ENCODE measurements at regions of chr10 and their contacts with region 1.

Region 1: DNA sequence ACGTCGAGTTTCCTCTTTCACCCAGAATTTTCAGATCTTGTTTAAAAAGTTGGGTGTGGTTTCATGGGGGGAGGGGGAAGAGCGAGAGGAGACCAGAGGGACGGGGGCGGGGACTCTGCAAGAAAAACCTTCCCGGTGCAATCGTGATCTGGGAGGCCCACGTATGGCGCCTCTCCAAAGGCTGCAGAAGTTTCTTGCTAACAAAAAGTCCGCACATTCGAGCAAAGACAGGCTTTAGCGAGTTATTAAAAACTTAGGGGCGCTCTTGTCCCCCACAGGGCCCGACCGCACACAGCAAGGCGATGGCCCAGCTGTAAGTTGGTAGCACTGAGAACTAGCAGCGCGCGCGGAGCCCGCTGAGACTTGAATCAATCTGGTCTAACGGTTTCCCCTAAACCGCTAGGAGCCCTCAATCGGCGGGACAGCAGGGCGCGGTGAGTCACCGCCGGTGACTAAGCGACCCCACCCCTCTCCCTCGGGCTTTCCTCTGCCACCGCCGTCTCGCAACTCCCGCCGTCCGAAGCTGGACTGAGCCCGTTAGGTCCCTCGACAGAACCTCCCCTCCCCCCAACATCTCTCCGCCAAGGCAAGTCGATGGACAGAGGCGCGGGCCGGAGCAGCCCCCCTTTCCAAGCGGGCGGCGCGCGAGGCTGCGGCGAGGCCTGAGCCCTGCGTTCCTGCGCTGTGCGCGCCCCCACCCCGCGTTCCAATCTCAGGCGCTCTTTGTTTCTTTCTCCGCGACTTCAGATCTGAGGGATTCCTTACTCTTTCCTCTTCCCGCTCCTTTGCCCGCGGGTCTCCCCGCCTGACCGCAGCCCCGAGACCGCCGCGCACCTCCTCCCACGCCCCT is at the start of gene VIM:
- DNase-seq: peak; percentile 81
- H3K4me3 Mint-ChIP-seq: peak within 1 kb of the TSS; percentile 92
- H3K27ac Mint-ChIP-seq: peak within 1 kb of the TSS; percentile 99
- H3K4me1 Mint-ChIP-seq: peaks cover 56% of the 10 kb centered on the region
- H3K27me3 Mint-ChIP-seq: peaks cover 2% of the 10 kb centered on the region
- total RNA-seq, gene VIM: 192 and 193 TPM in 2 replicates

Region 2: GRCh38 chr10:16436758-16437539 is 791.4 kb before region 1 on chr10 and contains the start of gene PTER:
- intact Hi-C with region 1: loop called (anchors 2 kb)
- DNase-seq: peak; percentile 98
- H3K4me3 Mint-ChIP-seq: peak within 1 kb of the TSS; percentile 88
- H3K27ac Mint-ChIP-seq: peak within 1 kb of the TSS; percentile 88
- H3K4me1 Mint-ChIP-seq: peaks cover 40% of the 10 kb centered on the region
- H3K27me3 Mint-ChIP-seq: peaks cover 9% of the 10 kb centered on the region
- total RNA-seq, gene PTER: 10.7 and 12.6 TPM in 2 replicates

Region 3: DNA sequence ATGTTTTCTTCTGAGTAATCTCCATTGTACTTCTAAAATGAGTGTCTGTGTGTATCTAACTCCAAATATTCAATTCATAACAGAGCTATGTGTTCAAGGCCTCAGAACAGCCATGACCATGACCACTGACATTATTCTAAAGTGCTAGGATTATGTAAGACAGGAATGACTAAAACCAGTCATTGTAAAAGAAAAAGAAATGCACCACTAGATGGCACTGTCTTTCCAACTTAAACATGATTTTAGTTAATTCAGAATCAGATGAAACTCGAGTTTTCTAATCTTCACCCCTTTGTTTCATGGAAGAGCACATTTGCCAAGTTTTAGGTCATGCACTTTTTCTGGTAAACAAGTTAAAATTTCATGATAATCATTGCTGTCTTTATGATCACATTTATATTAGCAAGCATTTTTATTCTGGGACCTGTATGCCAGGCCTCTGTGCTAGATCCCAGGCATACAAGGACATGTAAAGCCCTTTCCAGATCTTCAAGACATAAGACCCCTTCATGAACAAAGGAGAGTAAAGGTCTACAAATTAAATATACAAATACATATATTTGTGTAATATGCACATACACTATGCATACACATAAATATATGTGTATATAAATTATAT is 385.0 kb before region 1 on chr10:
- intact Hi-C with region 1: loop called (anchors 1 kb)
- DNase-seq: no peak
- H3K4me3 Mint-ChIP-seq: no peak overlapping the region
- H3K27ac Mint-ChIP-seq: no peak overlapping the region
- H3K4me1 Mint-ChIP-seq: no peaks in the 10 kb centered on the region
- H3K27me3 Mint-ChIP-seq: peaks cover 2% of the 10 kb centered on the region

Region 4: GRCh38 chr10:17001961-17002749 is 226.2 kb before region 1 on chr10:
- intact Hi-C with region 1: loop called (anchors 1 kb)
- DNase-seq: peak; percentile 42
- H3K4me3 Mint-ChIP-seq: peak overlapping the region; percentile 64
- H3K27ac Mint-ChIP-seq: peak overlapping the region; percentile 98
- H3K4me1 Mint-ChIP-seq: peaks cover 43% of the 10 kb centered on the region
- H3K27me3 Mint-ChIP-seq: peaks cover 49% of the 10 kb centered on the region

Region 5: GRCh38 chr10:17144757-17145156 is 83.6 kb before region 1 on chr10:
- intact Hi-C with region 1: loop called (anchors 1 kb)
- DNase-seq: peak; percentile 31
- H3K4me3 Mint-ChIP-seq: no peak overlapping the region
- H3K27ac Mint-ChIP-seq: peak overlapping the region; percentile 45
- H3K4me1 Mint-ChIP-seq: peaks cover 19% of the 10 kb centered on the region
- H3K27me3 Mint-ChIP-seq: no peaks in the 10 kb centered on the region

Region 6: GRCh38 chr10:17257466-17258321 is 29.4 kb after region 1 on chr10:
- intact Hi-C with region 1: loop called (anchors 1 kb)
- DNase-seq: peak; percentile 52
- H3K4me3 Mint-ChIP-seq: no peak overlapping the region
- H3K27ac Mint-ChIP-seq: no peak overlapping the region
- H3K4me1 Mint-ChIP-seq: peaks cover 17% of the 10 kb centered on the region
- H3K27me3 Mint-ChIP-seq: peaks cover 10% of the 10 kb centered on the region

Measured in activated T-helper 1 cell treated with anti-CD3 and anti-CD28 coated beads, Interleukin-12 subunit alpha, Interleukin-12 subunit beta, Interleukin-2, Interleukin-4 antibody, amounts not matched to agents 30 ng/mL and 10 ng/mL and 1 ng/mL, durations not matched to agents 14 hours and 24 hours and 36 hours (primary cell).